Lower leg skin (tissue), 4 donors: ENCODE measurements at regions of chr3 and their contacts with region 1.

Region 1: GRCh38 chr3:10602769-10603768 is 97.7 kb upstream of the ATP2B2 start:
- DNase-seq: no peak
- H3K4me3 ChIP-seq: no peak overlapping the region
- CTCF ChIP-seq: no peak
- POLR2A ChIP-seq: no peak

Region 2: DNA sequence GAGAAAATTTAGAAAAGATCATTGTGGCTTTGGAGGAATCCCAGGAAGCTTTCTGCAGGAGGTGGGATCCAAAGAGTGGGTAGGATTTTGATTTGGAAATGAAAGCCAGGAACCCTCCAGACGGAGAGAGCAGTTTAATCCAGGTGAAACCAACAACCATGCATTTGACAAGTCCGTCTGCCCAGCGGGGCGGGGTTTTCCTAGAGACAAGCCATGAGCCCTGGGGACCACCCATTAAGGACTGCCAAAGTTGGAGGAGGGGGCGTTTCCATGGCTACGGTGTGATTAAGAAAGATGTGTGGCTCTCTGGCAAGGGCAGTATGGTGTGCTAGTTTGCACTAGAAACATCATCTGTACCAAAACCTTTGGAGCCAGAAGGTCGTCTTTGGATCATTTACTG is 1407.0 kb before region 1 on chr3:
- intact Hi-C with region 1: loop called (anchors 5 kb)
- DNase-seq: peak in 1 of 2 donors; percentile 60
- H3K4me3 ChIP-seq: no peak overlapping the region
- CTCF ChIP-seq: no peak
- POLR2A ChIP-seq: no peak

Region 3: DNA sequence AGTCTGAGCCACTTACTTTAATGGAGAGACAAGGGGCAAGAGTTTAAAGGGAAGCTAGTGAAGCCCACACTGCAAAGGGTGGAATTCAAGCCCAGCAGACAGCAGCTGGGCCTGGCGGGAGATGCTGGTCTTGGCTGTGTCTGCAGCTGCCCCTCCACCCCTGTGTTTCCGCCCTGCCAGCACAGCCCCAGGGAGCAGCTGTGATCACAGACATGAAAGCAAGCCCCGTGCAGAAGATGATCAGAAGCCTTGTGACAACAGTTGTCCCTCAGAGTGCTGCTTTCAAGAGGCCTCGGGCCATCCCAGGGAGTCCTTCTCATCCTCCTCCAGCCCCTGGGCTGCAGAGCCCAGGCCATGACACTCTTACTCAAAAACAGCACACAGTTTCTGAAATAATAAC is 365.3 kb after region 1 on chr3:
- intact Hi-C with region 1: no loop called
- DNase-seq: no peak
- H3K4me3 ChIP-seq: no peak overlapping the region
- CTCF ChIP-seq: no peak
- POLR2A ChIP-seq: no peak